Vagina (tissue), 2 donors: ENCODE measurements at regions of chr22 and their contacts with region 1.

Region 1: DNA sequence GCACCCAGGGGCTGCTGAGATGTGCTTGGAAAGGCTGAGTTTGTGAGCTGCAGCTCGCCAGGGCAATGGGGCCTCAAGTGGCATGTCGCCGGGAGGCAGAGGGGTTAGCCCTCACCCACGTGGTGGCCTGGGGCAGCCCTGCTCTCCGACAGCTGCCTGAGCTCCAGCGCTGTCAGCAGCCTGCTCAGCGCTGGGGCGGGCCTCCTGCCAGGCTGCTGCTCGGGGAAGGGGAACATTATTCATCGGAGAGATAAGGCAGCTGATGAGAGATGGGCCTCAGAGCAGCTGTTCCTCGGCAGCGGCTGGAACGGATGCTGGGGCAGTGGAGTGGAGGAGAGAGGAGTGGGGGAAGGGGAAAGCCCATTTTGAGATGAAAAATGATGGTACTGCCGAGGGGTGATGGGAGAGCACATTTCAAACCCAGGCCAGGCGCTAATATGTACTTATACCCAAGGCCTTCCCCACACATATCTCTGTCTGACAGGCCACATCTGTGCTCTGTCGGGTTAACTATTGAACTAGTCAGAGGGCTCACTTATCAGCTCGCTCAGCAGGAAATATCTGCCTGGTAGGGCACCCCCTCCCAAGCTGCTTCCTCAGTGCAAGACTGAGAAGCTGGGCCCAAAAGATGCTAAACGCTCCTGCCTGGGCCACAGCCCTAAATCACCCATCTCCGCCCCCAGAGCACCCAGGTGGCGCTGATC is 79.5 kb downstream of the TIMP3 start:
- DNase-seq: no peak
- H3K4me3 ChIP-seq: no peak overlapping the region
- H3K27ac ChIP-seq: no peak overlapping the region
- H3K4me1 ChIP-seq: peaks cover 11% of the 10 kb centered on the region
- H3K27me3 ChIP-seq: no peaks in the 10 kb centered on the region
- CTCF ChIP-seq: no peak
- POLR2A ChIP-seq: no peak

Region 2: GRCh38 chr22:32850591-32851517 is 30.2 kb before region 1 on chr22:
- intact Hi-C with region 1: loop called (anchors 1 kb)
- DNase-seq: no peak
- H3K4me3 ChIP-seq: no peak overlapping the region
- H3K27ac ChIP-seq: peak overlapping the region; percentile 94
- H3K4me1 ChIP-seq: peaks cover 79% of the 10 kb centered on the region
- H3K27me3 ChIP-seq: no peaks in the 10 kb centered on the region
- CTCF ChIP-seq: no peak
- POLR2A ChIP-seq: no peak